Activated T-helper 2 cell treated with anti-CD3 and anti-CD28 coated beads, Interferon-gamma antibody, Interleukin-2, Interleukin-4, amounts not matched to agents 10 μg/mL and 5 μg/mL and 100 μg/mL, durations not matched to agents 14 hours and 24 hours and 36 hours (primary cell): ENCODE measurements at regions of chr19 and their contacts with region 1.

Region 1: DNA sequence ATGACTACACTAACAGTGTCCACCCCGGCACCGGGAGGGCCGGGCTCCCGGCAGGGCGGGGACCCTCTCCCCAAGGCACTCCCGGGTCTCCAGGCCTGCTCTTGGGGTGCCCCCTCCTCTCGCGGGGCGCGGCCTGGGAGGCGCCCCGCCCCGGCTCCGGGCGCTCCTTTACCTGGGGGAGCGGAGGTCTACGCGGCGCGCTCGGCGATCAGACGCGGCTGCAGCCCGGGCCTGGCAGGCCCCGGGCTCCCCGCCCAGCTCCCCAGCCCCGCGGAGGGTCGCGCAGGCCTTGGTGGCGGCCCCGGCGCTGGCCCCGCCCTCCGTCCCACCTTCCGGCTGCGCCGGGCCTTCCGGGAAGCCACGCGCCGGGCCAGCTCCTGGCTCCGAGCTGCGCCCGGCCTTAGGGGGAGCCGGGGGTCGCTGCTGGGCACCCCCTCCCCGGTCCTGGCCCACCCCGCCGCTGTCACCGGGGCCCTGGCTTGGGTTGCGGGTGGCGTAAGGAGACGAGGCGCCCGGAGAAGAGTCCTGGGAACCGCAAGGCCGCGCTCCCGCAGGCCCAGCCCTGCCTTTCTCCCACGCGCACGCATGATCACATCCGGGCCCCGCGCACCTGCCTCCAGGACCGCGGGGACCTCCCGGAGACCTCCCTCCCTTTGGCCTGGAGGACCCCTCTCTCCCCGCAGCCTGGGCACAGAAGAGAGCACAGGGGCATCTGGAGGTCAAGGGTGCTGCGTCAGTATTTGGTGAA is at the start of gene C19orf12:
- DNase-seq: peak; percentile 71
- H3K4me3 Mint-ChIP-seq: peak within 1 kb of the TSS; percentile 94
- H3K27ac Mint-ChIP-seq: peak within 1 kb of the TSS; percentile 94
- H3K4me1 Mint-ChIP-seq: peaks cover 45% of the 10 kb centered on the region
- H3K27me3 Mint-ChIP-seq: no peaks in the 10 kb centered on the region
- total RNA-seq, gene C19orf12: 41.9 and 42.2 TPM in 2 replicates

Region 2: DNA sequence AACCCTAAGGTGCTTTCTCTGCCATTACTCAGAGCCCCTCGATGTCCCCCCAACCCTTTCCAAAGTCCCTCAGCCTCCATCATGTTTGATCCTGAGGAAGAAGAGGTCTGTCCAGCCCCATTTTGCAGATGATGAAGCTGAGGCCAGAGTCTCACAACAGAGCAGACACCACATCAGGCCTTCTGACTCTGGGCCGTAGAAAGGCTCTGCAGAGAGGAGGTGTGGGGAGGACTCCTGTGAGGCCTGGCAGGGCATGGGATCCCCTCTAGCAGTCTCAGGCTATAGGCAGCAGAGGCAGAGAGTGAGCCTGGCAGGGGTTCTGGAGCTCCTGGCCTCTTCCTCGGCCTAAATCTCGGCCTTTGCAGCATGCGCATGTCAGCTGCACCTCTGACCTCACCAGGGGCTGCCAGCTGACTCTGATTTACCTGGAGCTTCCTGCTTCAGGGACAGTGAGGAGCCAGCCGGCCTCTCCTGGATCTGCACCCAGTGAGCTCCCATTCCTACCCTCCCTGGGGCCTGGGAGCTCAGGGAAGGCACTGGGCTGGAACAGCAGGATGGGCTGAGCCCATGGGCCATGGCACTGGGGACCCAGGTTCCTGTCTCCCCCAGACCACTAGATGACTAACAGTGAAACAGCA is 231.1 kb before region 1 on chr19:
- intact Hi-C with region 1: no loop called
- DNase-seq: no peak
- H3K4me3 Mint-ChIP-seq: no peak overlapping the region
- H3K27ac Mint-ChIP-seq: no peak overlapping the region
- H3K4me1 Mint-ChIP-seq: no peaks in the 10 kb centered on the region
- H3K27me3 Mint-ChIP-seq: no peaks in the 10 kb centered on the region

Region 3: GRCh38 chr19:29694669-29695627 is 20.2 kb before region 1 on chr19:
- intact Hi-C with region 1: loop called (anchors 1 kb)
- DNase-seq: peak; percentile 71
- H3K4me3 Mint-ChIP-seq: no peak overlapping the region
- H3K27ac Mint-ChIP-seq: no peak overlapping the region
- H3K4me1 Mint-ChIP-seq: peaks cover 8% of the 10 kb centered on the region
- H3K27me3 Mint-ChIP-seq: no peaks in the 10 kb centered on the region

Region 4: DNA sequence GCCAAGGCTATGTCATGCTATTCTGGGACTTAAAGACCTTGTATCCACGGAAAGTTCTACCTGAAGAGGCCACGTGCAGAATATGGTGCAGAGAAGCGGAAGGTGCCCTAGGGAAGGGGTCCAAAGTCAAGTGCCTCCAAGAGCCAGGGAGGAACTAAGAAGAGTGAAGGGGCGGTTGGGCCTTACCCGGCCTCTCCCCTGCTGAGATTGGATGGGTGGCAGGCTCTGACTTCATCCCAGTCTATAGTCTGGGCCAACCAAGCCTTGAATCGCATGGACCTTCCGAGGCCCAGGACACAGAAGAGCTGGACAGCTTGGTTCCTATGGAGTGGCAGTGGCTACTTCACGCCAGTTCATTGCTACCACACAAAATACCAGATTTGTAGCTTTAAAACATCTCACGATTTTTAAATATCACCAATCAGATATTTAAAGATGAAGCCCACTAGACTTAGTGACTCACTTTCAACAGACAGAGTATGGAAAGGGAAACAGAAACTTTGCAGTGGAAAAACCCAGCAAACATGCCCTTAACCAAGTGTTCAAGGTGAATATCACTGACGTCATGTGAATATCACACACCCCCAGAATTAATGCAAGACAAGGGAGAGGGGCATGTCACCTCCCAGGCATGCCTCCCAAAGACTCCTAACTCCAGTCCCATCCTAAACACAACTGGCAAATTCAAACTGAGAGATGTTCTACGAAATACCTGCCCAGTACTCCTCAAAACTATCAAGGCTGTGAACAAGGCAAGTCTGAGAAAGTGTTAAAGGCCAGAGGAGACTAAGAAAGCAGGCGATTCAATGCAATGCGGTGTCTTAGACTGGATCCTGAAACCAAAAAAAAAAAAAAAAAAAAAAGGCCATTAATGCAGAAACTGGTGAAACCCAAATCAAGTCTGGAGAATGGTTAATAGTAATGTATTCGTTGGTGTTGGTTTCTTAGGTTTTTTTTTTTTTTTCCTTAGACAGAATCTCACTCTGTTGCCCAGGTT is 10.3 kb before region 1 on chr19:
- intact Hi-C with region 1: loop called (anchors 1 kb)
- DNase-seq: no peak
- H3K4me3 Mint-ChIP-seq: peak overlapping the region; percentile 48
- H3K27ac Mint-ChIP-seq: peak overlapping the region; percentile 98
- H3K4me1 Mint-ChIP-seq: peaks cover 28% of the 10 kb centered on the region
- H3K27me3 Mint-ChIP-seq: no peaks in the 10 kb centered on the region

Region 5: DNA sequence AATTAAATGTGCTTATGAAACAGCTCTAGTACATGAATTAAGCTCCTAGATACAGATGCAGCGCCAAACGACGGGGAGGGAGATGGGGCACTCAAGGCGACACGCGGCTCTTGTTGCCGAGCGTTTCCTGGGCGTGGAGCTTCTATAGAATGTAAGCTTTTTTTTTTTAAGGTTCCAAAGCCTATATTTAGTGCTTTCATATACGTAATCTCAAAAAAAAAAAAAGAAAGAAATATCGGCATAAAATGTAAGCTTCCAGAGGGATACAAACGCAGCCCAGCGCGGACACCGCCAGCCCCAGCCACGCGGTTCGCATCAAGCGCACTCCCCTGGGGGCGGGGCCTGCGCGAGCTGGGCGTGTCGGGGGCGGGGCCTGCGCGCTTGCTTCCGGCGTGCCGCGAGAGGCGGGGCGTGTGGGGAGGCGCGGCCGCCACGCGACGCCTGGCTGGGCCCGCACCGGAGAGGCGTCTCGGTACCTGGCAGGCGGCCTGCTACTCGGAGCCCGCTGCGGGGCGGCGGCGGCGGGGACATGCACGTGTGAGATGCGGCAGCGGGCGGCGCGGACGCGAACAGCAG is 226.8 kb after region 1 on chr19 and contains the start of gene URI1:
- intact Hi-C with region 1: loop called (anchors 5 kb)
- DNase-seq: peak; percentile 90
- H3K4me3 Mint-ChIP-seq: peak within 1 kb of the TSS; percentile 90
- H3K27ac Mint-ChIP-seq: peak within 1 kb of the TSS; percentile 88
- H3K4me1 Mint-ChIP-seq: peaks cover 38% of the 10 kb centered on the region
- H3K27me3 Mint-ChIP-seq: no peaks in the 10 kb centered on the region
- total RNA-seq, gene URI1: 55.6 and 56.8 TPM in 2 replicates